ENCODE measurements at regions of chr3 and their contacts with region 1.

Region 1: DNA sequence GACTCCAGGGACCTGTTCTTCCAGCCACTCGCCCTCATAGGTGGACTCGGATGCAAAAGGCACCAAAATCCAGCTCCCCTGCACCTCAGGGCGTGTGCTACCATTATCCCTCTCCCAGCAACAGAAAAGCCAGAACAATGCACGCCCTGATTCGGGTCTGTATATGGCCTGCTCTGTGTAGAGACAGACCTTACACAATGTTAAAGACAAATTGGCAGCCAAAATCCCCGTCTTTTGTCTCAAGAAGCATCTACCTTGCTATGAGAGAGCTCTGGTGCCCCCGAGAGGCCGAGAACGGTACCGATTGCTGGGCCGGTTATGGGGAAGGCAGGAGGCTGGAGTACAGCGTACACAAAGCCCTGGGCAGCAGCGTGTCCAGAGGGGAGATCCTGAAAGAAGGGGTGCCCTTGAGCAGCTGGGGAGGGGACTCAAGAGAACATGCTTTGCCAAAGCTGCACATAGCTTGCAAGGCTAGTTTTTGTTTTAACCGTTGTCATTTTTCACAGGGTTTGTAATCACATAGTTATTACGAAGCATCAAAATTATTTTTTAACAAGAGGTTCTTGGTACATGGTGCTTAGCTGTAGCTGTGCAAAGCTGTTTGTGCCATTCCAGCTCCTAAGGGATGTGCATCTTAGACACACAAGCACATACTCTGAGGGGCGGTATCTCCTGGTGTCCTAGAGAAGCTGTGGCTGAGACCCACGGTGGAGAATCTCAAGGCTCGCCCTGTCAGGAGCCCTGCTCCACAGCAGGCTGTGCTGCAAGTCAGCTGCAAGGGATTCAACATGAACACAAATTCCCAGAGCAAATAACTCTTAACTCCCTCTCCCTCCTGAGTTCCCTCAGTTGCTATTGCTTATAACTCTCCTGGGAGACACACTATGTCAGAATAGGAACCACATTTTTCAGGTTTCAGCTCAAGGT is 461.5 kb upstream of the PPP2R3A start:
- DNase-seq: peak; percentile 26
- ATAC-seq: peak; percentile 64
- H3K4me3 Mint-ChIP-seq: peak overlapping the region; percentile 5
- H3K27ac Mint-ChIP-seq: no peak overlapping the region
- H3K4me1 Mint-ChIP-seq: peaks cover 11% of the 10 kb centered on the region
- H3K27me3 Mint-ChIP-seq: peaks cover 7% of the 10 kb centered on the region
- CTCF ChIP-seq: no peak

Region 2: DNA sequence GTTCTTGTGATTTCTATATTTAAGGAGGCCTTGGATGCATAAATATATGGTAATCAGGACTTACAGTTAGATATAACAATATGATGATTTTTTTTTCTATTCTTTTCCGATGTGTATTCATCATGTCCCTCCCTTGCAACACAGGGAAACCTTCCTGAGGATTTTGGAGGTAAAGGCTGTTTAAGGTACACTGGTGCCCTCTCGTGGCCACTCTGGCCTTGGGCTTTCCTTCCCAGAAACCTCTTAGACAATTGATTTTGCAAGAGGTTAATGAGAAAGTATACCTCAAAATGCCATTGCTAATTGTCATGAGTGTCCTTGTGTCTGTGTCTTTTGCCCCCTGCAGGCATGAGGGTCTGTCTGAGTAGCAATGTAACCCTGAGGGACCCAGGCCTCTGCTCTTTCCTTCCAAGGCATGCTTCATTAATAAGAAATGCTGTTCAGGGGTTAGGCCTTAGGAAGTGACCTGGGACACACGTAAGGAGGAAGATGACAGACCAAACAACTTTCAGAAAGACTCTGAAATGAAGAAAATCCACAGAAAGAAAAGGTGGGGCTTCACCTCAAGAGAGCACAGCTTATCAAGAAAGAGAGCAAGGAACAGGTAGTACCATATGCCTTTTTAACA is 391.2 kb after region 1 on chr3:
- CTCF ChIA-PET with region 1: no interaction called
- POLR2A ChIA-PET with region 1: no interaction called
- intact Hi-C with region 1: loop called (anchors 5 kb)
- DNase-seq: peak; percentile 20
- ATAC-seq: no peak
- H3K4me3 Mint-ChIP-seq: no peak overlapping the region
- H3K27ac Mint-ChIP-seq: no peak overlapping the region
- H3K4me1 Mint-ChIP-seq: no peaks in the 10 kb centered on the region
- H3K27me3 Mint-ChIP-seq: no peaks in the 10 kb centered on the region
- CTCF ChIP-seq: peak; percentile 58